ENCODE measurements at regions of chr13 and their contacts with region 1.

Region 1: DNA sequence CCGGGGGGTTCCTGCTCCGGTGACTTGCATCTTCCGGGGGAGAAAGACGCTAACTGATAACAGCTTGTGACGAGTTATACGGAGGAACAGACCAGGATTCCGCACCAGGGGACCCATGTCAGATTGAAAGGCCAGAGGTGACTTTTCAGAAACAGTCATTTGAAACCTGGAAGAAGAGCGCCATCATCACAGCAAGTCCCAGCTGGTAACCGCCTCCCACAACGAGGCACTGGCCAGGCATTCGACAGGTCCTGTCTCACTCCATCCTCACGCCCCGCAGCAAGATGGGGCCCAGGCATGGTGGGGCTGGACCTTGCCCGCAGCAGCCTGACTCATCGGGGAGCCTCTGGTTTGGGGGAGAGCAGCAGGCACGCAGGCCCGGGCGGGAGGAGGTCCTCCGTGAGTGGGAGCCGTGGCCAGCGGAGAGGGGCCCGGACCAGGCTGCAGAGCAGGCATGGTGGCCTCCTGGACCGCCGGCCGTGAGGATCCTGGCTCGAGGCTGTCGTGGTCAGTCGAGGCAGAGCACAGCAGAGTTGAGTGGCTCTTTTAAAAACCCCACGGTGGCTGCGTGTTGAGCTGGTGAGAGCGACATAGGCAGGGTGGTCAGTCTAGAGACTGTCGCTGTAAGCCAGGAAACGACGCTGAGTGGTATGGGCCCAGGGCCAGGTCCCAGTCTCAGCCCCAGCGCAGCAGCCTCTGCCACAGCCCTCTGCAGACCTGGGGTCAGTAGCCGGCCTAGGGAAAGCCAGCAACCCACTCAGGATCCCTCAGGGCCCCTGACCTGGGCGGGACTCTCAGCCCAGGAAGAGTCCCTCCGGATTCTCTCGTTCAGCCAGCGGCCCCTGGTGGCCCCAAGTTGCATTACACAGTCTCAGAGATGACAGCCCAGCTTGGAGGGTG is 94.9 kb upstream of the MCF2L start:
- DNase-seq: peak in 41 of 42 donors; percentile 71 to 93 (median 84)

Region 2: DNA sequence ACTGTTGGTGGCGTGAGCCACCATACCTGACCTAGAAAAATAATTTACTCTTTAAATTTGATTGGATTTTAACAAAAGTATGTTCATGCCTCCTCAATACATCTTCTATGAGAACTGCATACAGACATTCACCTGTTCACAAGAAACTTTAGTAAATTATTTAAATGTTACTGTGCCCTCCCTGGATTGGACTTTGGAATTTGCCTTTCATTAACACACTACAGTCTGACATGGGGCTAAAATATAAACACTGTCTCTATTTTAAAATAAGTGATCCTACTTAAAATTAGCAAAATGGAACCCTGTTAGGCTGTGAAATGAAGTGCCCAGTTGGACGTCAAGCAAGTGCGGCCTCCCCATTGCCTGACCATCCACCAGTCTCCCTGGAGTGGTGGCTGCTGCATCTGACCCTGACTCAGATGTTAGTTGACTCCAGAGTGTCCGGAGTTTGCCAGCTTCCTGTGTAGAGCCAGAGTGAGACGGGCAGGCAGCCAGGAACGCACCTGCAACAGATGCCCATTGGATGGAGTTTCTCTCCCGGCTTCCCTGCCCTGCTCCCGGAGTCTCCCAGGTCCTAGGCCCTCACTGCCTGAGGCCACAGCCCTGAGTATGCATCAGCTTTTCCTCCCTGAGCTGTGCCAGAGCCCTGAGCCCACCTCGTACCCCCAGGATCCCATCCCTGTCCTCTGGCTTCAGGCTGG is 230.2 kb before region 1 on chr13:
- intact Hi-C with region 1: loop called (anchors 5 kb)
- DNase-seq: peak in 1 of 42 donors; percentile 30

Region 3: GRCh38 chr13:112689303-112690165 is 184.6 kb before region 1 on chr13 and contains the start of gene ATP11A:
- intact Hi-C with region 1: loop called (anchors 5 kb)
- DNase-seq: peak; percentile 71 to 97 (median 94)

Region 4: DNA sequence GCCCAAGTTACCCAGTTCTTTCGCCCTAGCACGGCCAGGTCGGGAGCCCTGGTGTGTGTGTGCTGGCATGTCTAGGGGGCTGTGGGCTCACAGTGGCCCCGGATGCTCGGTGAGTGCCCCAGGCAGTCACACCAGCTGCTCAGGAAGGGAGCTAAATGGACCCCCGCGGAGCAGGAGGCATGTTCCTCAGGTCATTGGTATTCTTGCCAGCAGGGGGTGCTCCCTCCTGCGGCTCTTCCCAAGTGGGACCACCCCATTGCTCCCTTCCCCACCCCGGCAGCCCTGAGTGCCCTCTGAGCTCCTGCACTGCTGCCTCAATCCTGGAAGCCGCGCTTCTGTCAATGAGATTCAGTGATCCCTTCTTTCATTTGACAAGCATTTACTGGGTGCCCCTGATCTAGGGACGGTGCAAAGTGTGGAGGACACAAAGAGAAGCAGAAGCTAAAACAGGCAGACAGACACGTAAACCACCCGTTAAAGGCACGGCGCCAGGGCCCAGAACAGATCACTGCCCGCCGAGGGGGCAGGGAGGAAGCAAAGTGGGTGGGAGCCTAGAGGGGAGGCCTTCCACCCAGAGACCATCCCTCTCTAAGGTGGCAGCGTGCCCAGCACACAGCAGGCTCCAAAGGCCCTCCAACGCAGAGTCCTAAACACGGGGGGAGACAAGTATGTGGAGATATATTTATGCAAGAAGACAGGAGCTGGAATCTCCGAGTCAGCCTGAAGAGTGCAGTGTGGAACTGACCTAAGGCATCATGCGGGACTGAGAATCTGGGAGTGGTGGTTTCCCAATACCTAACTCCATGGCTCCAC is 584.4 kb after region 1 on chr13:
- intact Hi-C with region 1: no loop called
- DNase-seq: no peak

Measured in head of caudate nucleus (tissue), 42 donors.